ENCODE measurements at regions of chr5 and their contacts with region 1.

Region 1: GRCh38 chr5:32027717-32028321 is 146.3 kb downstream of the GOLPH3 start:
- DNase-seq: peak; percentile 35
- H3K4me3 ChIP-seq: peak overlapping the region in 1 of 3 experiments; percentile 19
- H3K27ac ChIP-seq: peak overlapping the region; percentile 34
- H3K4me1 ChIP-seq: peaks cover 38% of the 10 kb centered on the region
- H3K27me3 ChIP-seq: no peaks in the 10 kb centered on the region
- CTCF ChIP-seq: no peak
- POLR2A ChIP-seq: no peak

Region 2: DNA sequence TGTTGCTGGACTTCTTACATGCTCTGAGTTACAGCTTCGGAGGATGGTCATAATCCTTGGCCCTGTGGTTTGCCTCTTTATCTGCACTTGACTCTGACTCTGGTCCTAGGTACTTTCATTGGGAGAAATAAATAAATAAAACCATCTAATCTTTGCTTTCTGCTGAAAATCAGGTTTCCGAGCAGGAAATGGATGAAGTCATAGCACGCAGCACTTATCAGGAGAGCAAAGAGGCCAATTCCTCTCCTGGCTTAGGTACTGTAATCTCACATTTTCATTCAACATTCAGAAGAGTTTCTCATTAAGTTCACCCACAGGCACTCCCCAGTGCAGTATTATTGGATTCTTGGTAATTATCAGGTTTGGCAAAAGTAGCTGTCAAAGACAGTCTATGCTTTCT is 41.6 kb after region 1 on chr5:
- CTCF ChIA-PET with region 1: no interaction called
- POLR2A ChIA-PET with region 1: no interaction called
- dilution Hi-C with region 1: no loop called
- intact Hi-C with region 1: loop called (anchors 2 kb)
- DNase-seq: peak; percentile 46
- H3K4me3 ChIP-seq: no peak overlapping the region
- H3K27ac ChIP-seq: no peak overlapping the region
- H3K4me1 ChIP-seq: peaks cover 19% of the 10 kb centered on the region
- H3K27me3 ChIP-seq: no peaks in the 10 kb centered on the region
- CTCF ChIP-seq: no peak
- POLR2A ChIP-seq: no peak

Region 3: GRCh38 chr5:32206509-32207354 is 178.9 kb after region 1 on chr5:
- CTCF ChIA-PET with region 1: no interaction called
- POLR2A ChIA-PET with region 1: no interaction called
- dilution Hi-C with region 1: no loop called
- intact Hi-C with region 1: no loop called
- DNase-seq: no peak
- H3K4me3 ChIP-seq: no peak overlapping the region
- H3K27ac ChIP-seq: no peak overlapping the region
- H3K4me1 ChIP-seq: peaks cover 4% of the 10 kb centered on the region
- H3K27me3 ChIP-seq: no peaks in the 10 kb centered on the region
- CTCF ChIP-seq: no peak
- POLR2A ChIP-seq: no peak

Measured in endothelial cell of umbilical vein (primary cell).